ENCODE measurements at regions of chr12 and their contacts with region 1.

Region 1: GRCh38 chr12:55188974-55189556 is 31.8 kb upstream of the OR10A7 start:
- DNase-seq: no peak
- ATAC-seq: no peak

Region 2: DNA sequence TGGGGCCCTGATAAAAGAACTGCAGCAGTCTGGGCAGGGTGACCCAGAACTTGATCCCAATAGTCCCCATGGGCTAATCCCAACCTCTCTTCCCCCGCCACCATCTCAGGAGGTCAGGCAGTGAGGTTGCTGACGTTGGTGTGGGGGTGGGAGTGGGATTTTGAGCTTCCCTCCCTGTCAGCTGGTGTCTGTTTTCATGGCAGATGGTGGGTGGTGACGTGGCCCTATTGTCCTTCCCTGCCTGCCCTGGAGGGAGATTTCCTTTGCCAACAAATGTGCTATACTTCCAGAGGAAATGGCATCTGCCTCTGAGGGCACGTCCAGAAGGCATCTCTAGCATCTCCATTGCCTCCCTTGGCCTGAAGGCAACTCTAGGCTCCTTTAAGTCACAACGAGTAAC is 131.6 kb before region 1 on chr12:
- intact Hi-C with region 1: no loop called
- DNase-seq: no peak
- ATAC-seq: no peak

Region 3: DNA sequence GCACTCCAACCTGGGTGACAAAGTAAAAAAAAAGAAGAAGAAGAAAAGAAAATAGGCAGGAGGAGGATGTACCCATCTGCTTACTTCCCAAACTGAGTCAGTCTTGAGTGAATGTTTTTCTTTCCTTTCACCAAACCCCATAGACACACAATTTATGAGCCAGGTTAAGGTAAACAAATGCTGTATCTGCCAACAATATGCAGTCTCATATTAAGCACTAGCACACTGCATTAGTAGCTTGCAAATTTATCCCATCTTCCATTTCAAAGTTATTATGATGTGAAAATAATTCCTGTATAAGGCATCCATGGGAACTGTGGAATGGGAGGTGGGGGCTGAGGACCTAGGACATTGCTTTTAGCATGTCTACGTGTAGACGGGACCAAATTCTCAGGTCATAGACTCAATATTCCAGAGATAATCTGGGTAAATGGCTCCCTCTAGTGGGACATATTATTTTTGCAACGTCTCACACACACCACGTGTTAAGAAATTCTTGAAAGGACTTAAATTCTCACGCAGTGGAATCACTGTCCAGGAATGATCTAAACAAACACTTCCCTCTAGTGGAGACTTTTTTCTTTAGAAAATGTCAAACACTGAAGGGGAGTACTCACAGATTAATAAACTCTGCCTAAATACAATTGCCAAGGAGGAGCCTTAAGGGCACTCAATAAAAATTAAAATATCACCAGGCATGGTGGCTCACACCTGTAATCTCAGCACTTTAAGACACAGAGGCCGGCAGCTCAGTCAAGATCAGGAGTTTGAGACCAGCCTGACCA is 430.5 kb after region 1 on chr12:
- intact Hi-C with region 1: loop called (anchors 1 kb)
- DNase-seq: no peak
- ATAC-seq: peak; percentile 91

Measured in Right ventricle myocardium inferior (tissue), 1 donor.